PC-9 (cell line): ENCODE measurements at regions of chr6 and their contacts with region 1.

Region 1: DNA sequence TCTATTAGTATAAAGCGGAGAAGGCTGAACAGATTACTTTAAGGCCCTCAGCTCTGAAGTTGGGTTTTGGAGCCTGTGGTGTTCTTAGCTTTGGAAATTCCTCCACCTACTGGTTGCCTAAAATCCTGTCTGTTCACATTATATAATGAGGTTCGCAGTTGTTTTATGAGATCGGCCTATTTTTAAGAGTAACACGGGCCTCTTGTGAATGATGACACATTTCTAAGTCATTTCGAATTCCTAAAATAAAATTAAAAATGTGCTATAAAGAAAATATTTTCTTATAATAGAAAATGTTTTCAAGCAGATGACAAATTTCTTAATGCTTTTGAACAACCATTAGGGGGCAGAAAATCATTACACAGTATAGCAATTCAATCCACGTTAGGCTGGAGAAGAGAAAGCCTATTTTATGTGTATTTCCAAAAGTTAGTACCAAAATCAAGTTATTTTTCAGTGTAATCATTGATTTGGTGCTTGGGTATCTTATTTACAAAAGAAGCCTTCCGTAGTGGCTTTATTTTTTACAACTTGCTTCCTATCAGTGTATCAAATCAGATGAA is 15.8 kb upstream of the FAM8A1 start:
- DNase-seq: no peak
- H3K4me3 ChIP-seq: no peak overlapping the region
- H3K27ac ChIP-seq: no peak overlapping the region
- H3K4me1 ChIP-seq: peaks cover 5% of the 10 kb centered on the region; the same call in 1 of the 2 replicates
- H3K27me3 ChIP-seq: no peaks in the 10 kb centered on the region
- CTCF ChIP-seq: peak; percentile 90

Region 2: GRCh38 chr6:17093686-17094085 is 490.6 kb before region 1 on chr6:
- CTCF ChIA-PET with region 1: no interaction called
- POLR2A ChIA-PET with region 1: no interaction called
- intact Hi-C with region 1: loop called (anchors 5 kb)
- DNase-seq: peak in 1 of 2 experiments; percentile 23
- H3K4me3 ChIP-seq: no peak overlapping the region
- H3K27ac ChIP-seq: no peak overlapping the region
- H3K4me1 ChIP-seq: 0 out of 2 replicates have a peak, but pooled peaks cover 4% of the 10 kb centered on the region
- H3K27me3 ChIP-seq: no peaks in the 10 kb centered on the region
- CTCF ChIP-seq: peak; percentile 57

Region 3: DNA sequence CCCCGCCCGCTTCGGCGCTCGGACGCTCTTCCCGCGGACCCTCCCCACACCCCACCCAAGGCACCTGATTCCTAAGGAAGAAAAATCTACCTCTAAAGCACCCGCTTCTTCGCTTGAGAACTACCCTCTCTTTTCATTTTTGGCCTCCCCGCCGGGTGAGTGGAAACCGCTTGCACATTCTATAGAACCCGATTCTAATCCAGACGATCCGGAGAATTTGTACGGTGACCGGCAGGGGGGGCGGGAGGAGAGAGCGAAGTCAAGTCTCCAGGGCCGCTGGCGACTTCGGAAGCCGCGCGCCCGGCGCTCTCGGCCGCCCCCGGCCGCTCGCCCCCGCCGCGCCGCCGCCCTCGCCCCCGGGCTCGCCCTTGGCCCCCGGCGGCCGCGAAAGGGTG is 303.2 kb before region 1 on chr6 and contains the start of gene RBM24:
- CTCF ChIA-PET with region 1: no interaction called
- POLR2A ChIA-PET with region 1: no interaction called
- intact Hi-C with region 1: loop called (anchors 5 kb)
- DNase-seq: peak in 1 of 2 experiments; percentile 43
- H3K4me3 ChIP-seq: peak within 1 kb of the TSS; percentile 28; the same call in 1 of the 2 replicates
- H3K27ac ChIP-seq: no peak within 1 kb of the TSS
- H3K4me1 ChIP-seq: peaks cover 21% of the 10 kb centered on the region
- H3K27me3 ChIP-seq: no peaks in the 10 kb centered on the region
- CTCF ChIP-seq: no peak
- total RNA-seq, gene RBM24: 0.72 and 0.85 TPM in 2 replicates

Region 4: DNA sequence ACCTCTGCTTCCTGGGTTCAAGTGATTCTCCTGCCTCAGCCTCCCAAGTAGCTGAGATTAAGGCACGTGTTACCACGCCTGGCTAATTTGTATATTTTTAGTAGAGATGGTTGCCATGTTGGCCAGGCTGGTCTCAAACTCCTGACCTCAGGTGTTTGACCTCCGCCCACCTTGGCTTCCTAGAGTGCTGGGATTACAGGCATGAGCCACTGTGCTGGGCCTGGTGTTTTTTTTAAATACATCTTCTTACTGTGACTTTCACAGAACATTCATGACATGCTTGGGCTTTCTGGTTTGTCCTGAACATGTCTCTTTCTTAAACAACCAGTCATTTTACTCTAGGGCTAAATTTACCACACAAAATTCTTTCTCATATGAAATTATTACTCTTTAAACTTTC is 18.9 kb before region 1 on chr6:
- CTCF ChIA-PET with region 1: no interaction called
- POLR2A ChIA-PET with region 1: no interaction called
- intact Hi-C with region 1: no loop called
- DNase-seq: no peak
- H3K4me3 ChIP-seq: no peak overlapping the region
- H3K27ac ChIP-seq: no peak overlapping the region
- H3K4me1 ChIP-seq: no peaks in the 10 kb centered on the region
- H3K27me3 ChIP-seq: no peaks in the 10 kb centered on the region
- CTCF ChIP-seq: no peak

Region 5: GRCh38 chr6:17628873-17629272 is 44.6 kb after region 1 on chr6:
- CTCF ChIA-PET with region 1: no interaction called
- POLR2A ChIA-PET with region 1: no interaction called
- intact Hi-C with region 1: no loop called
- DNase-seq: no peak
- H3K4me3 ChIP-seq: no peak overlapping the region
- H3K27ac ChIP-seq: no peak overlapping the region
- H3K4me1 ChIP-seq: no peaks in the 10 kb centered on the region
- H3K27me3 ChIP-seq: no peaks in the 10 kb centered on the region
- CTCF ChIP-seq: no peak

Region 6: GRCh38 chr6:17673543-17674254 is 89.4 kb after region 1 on chr6:
- CTCF ChIA-PET with region 1: no interaction called
- POLR2A ChIA-PET with region 1: no interaction called
- intact Hi-C with region 1: no loop called
- DNase-seq: no peak
- H3K4me3 ChIP-seq: no peak overlapping the region
- H3K27ac ChIP-seq: no peak overlapping the region
- H3K4me1 ChIP-seq: no peaks in the 10 kb centered on the region
- H3K27me3 ChIP-seq: no peaks in the 10 kb centered on the region
- CTCF ChIP-seq: no peak

Region 7: DNA sequence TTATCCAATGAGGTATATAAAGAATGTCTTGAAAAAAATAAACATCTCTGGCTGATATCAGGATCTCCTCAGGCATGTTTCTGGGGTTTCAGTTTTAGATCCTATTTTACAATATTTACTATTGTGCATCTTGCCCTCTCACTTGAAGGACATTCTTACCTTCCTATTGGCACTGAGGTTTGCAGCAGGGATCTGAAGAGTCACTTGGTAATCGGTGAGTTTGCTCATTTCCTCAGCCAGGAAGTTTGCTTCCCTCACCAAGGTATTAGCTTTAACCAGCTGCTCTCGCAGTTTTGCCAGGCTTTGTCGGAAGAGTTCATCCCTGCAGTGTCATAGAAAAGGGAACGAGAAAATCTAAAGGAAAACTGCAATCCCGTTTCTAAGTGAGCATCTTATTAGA is 224.3 kb after region 1 on chr6:
- CTCF ChIA-PET with region 1: interaction called, 5 read pairs
- POLR2A ChIA-PET with region 1: no interaction called
- intact Hi-C with region 1: loop called (anchors 1 kb)
- DNase-seq: no peak
- H3K4me3 ChIP-seq: no peak overlapping the region
- H3K27ac ChIP-seq: no peak overlapping the region
- H3K4me1 ChIP-seq: no peaks in the 10 kb centered on the region
- H3K27me3 ChIP-seq: no peaks in the 10 kb centered on the region
- CTCF ChIP-seq: no peak

Region 8: GRCh38 chr6:17998456-17998855 is 414.1 kb after region 1 on chr6:
- CTCF ChIA-PET with region 1: no interaction called
- POLR2A ChIA-PET with region 1: no interaction called
- intact Hi-C with region 1: no loop called
- DNase-seq: peak; percentile 12 to 59
- H3K4me3 ChIP-seq: no peak overlapping the region
- H3K27ac ChIP-seq: no peak overlapping the region
- H3K4me1 ChIP-seq: peaks cover 24% of the 10 kb centered on the region
- H3K27me3 ChIP-seq: no peaks in the 10 kb centered on the region
- CTCF ChIP-seq: no peak

Region 9: GRCh38 chr6:18155150-18155863 is 571.0 kb after region 1 on chr6 and contains the start of gene KDM1B:
- CTCF ChIA-PET with region 1: no interaction called
- POLR2A ChIA-PET with region 1: no interaction called
- intact Hi-C with region 1: loop called (anchors 10 kb)
- DNase-seq: peak; percentile 88 to 99
- H3K4me3 ChIP-seq: peak within 1 kb of the TSS; percentile 95
- H3K27ac ChIP-seq: peak within 1 kb of the TSS; percentile 35
- H3K4me1 ChIP-seq: peaks cover 25% of the 10 kb centered on the region
- H3K27me3 ChIP-seq: no peaks in the 10 kb centered on the region
- CTCF ChIP-seq: no peak
- total RNA-seq, gene KDM1B: 15.6 and 21.5 TPM in 2 replicates